Activated CD4-positive, alpha-beta memory T cell treated with anti-CD3 and anti-CD28 coated beads for 36 hours (primary cell): ENCODE measurements at regions of chr10 and their contacts with region 1.

Region 1: GRCh38 chr10:74589226-74589673 is 237.2 kb upstream of the KAT6B start:
- DNase-seq: peak; percentile 91
- H3K4me3 Mint-ChIP-seq: no peak overlapping the region
- H3K27ac Mint-ChIP-seq: peak overlapping the region; percentile 58
- H3K4me1 Mint-ChIP-seq: peaks cover 68% of the 10 kb centered on the region
- H3K27me3 Mint-ChIP-seq: no peaks in the 10 kb centered on the region

Region 2: DNA sequence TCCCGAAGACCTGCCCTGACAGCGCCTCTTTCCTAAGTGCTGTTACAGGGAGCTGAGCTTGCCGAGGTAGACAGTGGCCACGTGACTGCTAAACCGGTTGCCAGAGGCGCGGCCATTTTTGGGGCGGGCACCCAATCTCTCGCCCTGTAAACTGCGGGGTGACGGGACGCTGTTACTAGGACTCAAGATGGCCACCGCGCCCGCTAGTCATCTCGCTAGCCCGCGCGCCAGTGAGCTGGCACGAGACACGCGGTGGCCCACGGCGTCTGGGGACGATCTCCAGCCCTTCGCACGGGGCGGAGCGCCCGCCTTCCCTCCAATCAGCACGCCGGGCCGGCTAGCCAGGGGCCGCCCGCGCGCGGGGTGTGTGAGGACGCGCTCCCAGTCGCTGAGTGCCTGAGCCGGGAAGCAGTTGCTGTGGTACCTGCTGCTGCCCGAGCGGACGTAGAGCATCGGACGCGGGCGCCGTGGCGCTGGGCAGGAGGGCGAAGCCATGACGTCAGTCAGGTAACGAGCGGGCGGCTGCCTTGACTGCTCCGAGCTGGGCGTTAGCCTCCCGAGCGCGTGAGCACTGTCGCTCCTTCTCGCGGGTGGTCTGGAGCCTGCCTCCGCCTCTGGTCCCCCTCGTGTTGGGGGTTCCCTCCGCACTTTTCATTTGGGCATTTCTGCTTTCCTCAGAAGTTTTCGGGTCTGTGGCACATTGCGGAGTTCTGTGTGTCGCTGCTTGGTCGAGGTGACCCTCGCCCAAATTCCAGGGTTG is 412.7 kb before region 1 on chr10:
- CTCF ChIA-PET with region 1: no interaction called
- POLR2A ChIA-PET with region 1: no interaction called
- intact Hi-C with region 1: loop called (anchors 10 kb)
- DNase-seq: peak; percentile 98
- H3K4me3 Mint-ChIP-seq: peak overlapping the region; percentile 87
- H3K27ac Mint-ChIP-seq: peak overlapping the region; percentile 92
- H3K4me1 Mint-ChIP-seq: peaks cover 35% of the 10 kb centered on the region
- H3K27me3 Mint-ChIP-seq: no peaks in the 10 kb centered on the region

Region 3: DNA sequence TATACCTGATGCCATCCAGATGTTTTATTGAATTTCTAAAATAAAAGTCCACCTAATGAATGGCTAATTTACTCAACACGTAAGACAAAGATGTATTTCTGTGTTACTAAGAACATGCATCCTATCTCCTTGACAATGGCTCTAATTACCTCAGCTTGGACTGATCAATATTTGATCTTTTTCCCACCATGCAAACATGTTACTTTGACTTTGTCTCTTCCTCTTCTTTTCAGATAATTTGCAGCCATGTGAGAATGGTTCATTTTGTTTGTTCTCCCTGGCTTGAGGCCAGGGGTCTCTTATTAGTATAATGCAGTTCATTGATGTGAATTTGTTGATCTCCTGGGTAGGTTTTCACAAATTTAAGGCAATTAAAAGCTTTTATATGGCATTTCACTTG is 136.1 kb before region 1 on chr10:
- CTCF ChIA-PET with region 1: no interaction called
- POLR2A ChIA-PET with region 1: no interaction called
- intact Hi-C with region 1: loop called (anchors 5 kb)
- DNase-seq: no peak
- H3K4me3 Mint-ChIP-seq: no peak overlapping the region
- H3K27ac Mint-ChIP-seq: no peak overlapping the region
- H3K4me1 Mint-ChIP-seq: peaks cover 7% of the 10 kb centered on the region
- H3K27me3 Mint-ChIP-seq: no peaks in the 10 kb centered on the region

Region 4: GRCh38 chr10:74799721-74800221 is 210.5 kb after region 1 on chr10:
- CTCF ChIA-PET with region 1: no interaction called
- POLR2A ChIA-PET with region 1: no interaction called
- intact Hi-C with region 1: loop called (anchors 2 kb)
- DNase-seq: peak; percentile 65
- H3K4me3 Mint-ChIP-seq: no peak overlapping the region
- H3K27ac Mint-ChIP-seq: peak overlapping the region; percentile 39
- H3K4me1 Mint-ChIP-seq: peaks cover 10% of the 10 kb centered on the region
- H3K27me3 Mint-ChIP-seq: no peaks in the 10 kb centered on the region

Region 5: GRCh38 chr10:75019370-75019769 is 430.1 kb after region 1 on chr10:
- CTCF ChIA-PET with region 1: interaction called, 3 read pairs
- POLR2A ChIA-PET with region 1: no interaction called
- intact Hi-C with region 1: loop called (anchors 5 kb)
- DNase-seq: no peak
- H3K4me3 Mint-ChIP-seq: no peak overlapping the region
- H3K27ac Mint-ChIP-seq: no peak overlapping the region
- H3K4me1 Mint-ChIP-seq: peaks cover 18% of the 10 kb centered on the region
- H3K27me3 Mint-ChIP-seq: no peaks in the 10 kb centered on the region

Region 6: DNA sequence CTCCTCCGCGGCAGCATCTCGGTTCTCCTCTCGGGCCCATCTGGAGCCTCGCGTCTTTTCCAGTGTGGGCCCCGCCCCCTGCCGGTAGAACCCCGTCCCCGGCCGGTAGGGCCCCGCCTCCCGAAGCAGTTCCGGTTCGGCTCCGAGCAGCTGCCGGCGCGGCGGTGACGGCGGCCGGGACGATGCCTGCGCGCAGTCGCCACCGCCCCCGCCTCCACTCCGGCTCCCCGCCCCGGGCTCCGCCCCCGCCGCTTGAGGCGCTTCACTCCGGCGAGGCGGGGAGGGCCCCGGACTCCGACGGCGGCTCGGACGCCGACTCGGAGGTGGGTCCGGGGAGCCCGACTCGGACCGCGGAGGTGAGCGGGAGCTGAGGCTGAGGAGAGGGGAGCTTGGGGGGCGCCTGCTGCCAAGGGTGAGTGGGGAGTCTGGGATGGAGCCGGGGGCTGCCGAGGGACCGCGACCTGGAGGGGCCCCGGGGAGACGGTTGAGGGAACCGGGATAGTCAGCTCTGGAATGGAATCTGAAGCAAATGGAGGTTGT is 522.2 kb after region 1 on chr10 and contains the start of gene SAMD8:
- CTCF ChIA-PET with region 1: no interaction called
- POLR2A ChIA-PET with region 1: no interaction called
- intact Hi-C with region 1: loop called (anchors 2 kb)
- DNase-seq: peak; percentile 99
- H3K4me3 Mint-ChIP-seq: peak within 1 kb of the TSS; percentile 97
- H3K27ac Mint-ChIP-seq: peak within 1 kb of the TSS; percentile 99
- H3K4me1 Mint-ChIP-seq: peaks cover 52% of the 10 kb centered on the region
- H3K27me3 Mint-ChIP-seq: no peaks in the 10 kb centered on the region
- total RNA-seq, gene SAMD8: 18.5 to 20.5 TPM